CD8-positive, alpha-beta T cell (primary cell): ENCODE measurements at regions of chr1 and their contacts with region 1.

Region 1: GRCh38 chr1:19811206-19811851 is 3.8 kb downstream of the RNF186 start:
- DNase-seq: peak in 7 of 9 experiments; percentile 13 to 56 (median 32)
- ATAC-seq: no peak
- H3K4me3 ChIP-seq: no peak overlapping the region
- H3K4me3 Mint-ChIP-seq: no peak overlapping the region
- H3K27ac ChIP-seq: no peak overlapping the region
- H3K27ac Mint-ChIP-seq: no peak overlapping the region
- H3K4me1 ChIP-seq: no peaks in the 10 kb centered on the region
- H3K4me1 Mint-ChIP-seq: no peaks in the 10 kb centered on the region
- H3K27me3 ChIP-seq: no peaks in the 10 kb centered on the region
- H3K27me3 Mint-ChIP-seq: no peaks in the 10 kb centered on the region
- CTCF ChIP-seq: no peak

Region 2: DNA sequence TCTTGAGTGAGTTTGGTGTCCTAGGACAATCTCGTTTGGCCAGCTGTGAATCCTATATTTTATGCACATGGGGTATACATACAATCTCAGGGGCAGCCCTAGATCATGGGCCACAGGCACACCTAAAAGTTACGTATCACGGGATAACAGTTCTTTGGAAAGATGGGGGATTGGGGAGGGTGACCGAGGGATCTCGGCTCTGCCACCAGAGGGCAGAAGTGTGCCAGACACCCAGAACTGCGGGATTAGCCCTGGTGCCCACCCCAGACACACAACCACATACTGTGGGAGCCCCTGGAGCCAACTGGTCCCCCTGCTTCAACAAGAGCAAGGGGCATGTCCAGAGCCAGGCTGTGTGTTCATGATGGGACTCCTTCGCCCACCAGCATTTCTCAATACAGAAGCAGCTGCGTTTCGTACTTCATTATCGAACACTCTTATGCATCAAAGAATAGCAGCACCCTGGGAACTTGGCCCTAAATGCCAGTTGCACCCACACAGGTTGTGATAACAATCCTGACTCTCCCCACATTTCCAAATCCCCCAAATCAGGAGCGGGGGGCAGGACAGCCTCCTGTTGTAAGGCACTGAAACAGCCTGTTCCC is 49.1 kb before region 1 on chr1:
- CTCF ChIA-PET with region 1: interaction called, 8 read pairs
- POLR2A ChIA-PET with region 1: no interaction called
- intact Hi-C with region 1: loop called (anchors 1 to 2 kb)
- DNase-seq: peak in 6 of 9 experiments; percentile 12 to 52 (median 32)
- ATAC-seq: no peak
- H3K4me3 ChIP-seq: no peak overlapping the region
- H3K4me3 Mint-ChIP-seq: no peak overlapping the region
- H3K27ac ChIP-seq: no peak overlapping the region
- H3K27ac Mint-ChIP-seq: no peak overlapping the region
- H3K4me1 ChIP-seq: no peaks in the 10 kb centered on the region
- H3K4me1 Mint-ChIP-seq: no peaks in the 10 kb centered on the region
- H3K27me3 ChIP-seq: no peaks in the 10 kb centered on the region
- H3K27me3 Mint-ChIP-seq: no peaks in the 10 kb centered on the region
- CTCF ChIP-seq: peak; percentile 57

Region 3: DNA sequence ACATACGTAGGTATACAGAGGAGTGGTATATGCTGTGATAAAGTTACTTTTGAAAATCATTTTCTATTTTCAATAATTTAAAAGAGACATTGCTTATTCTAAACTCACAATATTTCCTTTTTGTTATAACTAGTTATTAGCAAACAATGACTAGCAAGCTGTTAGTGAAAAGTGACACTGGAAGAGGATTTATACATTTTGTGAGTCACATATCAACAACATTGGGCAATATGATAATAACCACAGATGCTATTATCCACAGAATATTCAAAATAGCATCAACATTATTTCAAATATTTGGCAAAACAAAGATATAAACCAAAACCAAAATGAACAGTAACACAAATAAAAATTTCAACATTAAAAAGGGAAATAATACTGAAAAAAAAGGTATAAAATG is 1079.8 kb after region 1 on chr1:
- CTCF ChIA-PET with region 1: no interaction called
- POLR2A ChIA-PET with region 1: no interaction called
- intact Hi-C with region 1: no loop called
- DNase-seq: no peak
- ATAC-seq: no peak
- H3K4me3 ChIP-seq: no peak overlapping the region
- H3K4me3 Mint-ChIP-seq: no peak overlapping the region
- H3K27ac ChIP-seq: no peak overlapping the region
- H3K27ac Mint-ChIP-seq: no peak overlapping the region
- H3K4me1 ChIP-seq: no peaks in the 10 kb centered on the region
- H3K4me1 Mint-ChIP-seq: no peaks in the 10 kb centered on the region
- H3K27me3 ChIP-seq: no peaks in the 10 kb centered on the region
- H3K27me3 Mint-ChIP-seq: no peaks in the 10 kb centered on the region
- CTCF ChIP-seq: no peak